Dorsolateral prefrontal cortex (tissue), 120 donors: ENCODE measurements at regions of chr12 and their contacts with region 1.

Region 1: DNA sequence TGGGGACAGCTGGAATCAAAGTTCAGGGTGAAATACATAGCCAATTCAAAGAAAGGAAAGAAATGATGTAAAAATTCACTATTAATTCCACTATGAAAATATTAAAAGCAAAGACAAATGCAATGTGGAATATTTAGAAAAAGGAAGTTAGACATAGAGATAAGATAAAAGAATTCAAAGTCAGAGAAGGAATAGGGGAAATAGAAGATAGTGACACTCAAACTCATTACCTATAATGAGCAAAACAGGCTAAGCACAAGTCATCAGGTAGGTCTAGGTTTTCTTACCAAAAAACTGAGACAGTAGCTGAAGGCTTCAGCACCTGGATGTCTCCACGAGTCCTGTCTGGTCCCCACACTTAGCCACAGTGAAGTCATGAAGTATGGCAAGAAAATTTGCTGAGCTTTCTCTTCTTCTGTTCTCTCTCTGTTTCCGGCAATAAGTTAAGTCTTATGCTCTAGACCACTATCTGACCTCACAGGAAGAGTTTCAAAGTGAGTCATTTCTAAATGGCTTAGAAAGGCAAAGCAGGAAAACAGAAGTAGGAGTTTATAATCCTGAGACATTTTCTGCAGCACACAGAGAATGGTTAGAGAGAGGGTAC is at the start of gene C3AR1:
- DNase-seq: no peak
- H3K4me3 ChIP-seq: peak within 1 kb of the TSS in 40 of 59 donors; percentile 2 to 47 (median 26)
- H3K27ac ChIP-seq: peak within 1 kb of the TSS in 34 of 59 donors; percentile 0 to 65 (median 38)
- H3K27me3 ChIP-seq: no peaks in the 10 kb centered on the region
- CTCF ChIP-seq: no peak
- total RNA-seq, gene C3AR1: 1.1 to 23.1 (median 7.0) TPM

Region 2: GRCh38 chr12:8032242-8033152 is 33.6 kb before region 1 on chr12 and contains the start of gene FOXJ2:
- intact Hi-C with region 1: loop called in 1 of 2 experiments (anchors 1 kb)
- DNase-seq: peak; percentile 45 to 86 (median 68)
- H3K4me3 ChIP-seq: peak within 1 kb of the TSS; percentile 69 to 100 (median 96)
- H3K27ac ChIP-seq: peak within 1 kb of the TSS; percentile 58 to 98 (median 93)
- H3K27me3 ChIP-seq: no peaks in the 10 kb centered on the region
- CTCF ChIP-seq: peak in 10 of 56 donors; percentile 2 to 24 (median 13)
- total RNA-seq, gene FOXJ2: 13.4 to 28.9 (median 16.8) TPM